ENCODE measurements at regions of chr12 and their contacts with region 1.

Region 1: DNA sequence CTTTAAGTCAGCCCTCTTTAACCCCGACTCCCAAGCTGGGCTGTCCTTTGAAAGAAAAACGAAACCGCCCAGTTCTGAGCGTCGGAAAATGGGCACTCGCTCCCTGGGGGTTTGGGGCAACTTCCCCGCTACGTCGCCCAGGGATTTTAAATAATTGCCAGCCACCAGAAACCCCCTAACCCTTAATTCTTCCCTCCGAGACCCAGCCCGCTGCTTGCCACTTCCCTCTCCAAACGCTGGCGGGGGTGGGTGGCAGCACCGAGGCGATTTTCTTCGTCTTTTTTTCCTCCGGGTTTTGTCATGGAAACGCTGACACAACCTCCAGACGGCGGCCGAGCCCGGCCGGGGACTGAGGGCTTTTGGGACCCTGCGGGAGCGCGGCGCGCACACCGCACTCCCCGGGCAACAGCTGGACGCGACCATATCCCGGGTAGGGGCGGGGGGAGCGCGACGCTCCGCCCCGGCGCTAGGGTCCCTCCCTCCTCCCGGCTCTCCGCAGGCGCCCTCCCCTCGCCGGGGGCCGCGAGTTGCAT is at the start of gene CHST11:
- DNase-seq: peak; percentile 71
- ATAC-seq: peak; percentile 70
- H3K4me3 Mint-ChIP-seq: peak within 1 kb of the TSS; percentile 99
- H3K27ac Mint-ChIP-seq: peak within 1 kb of the TSS; percentile 93
- H3K4me1 Mint-ChIP-seq: peaks cover 49% of the 10 kb centered on the region
- H3K27me3 Mint-ChIP-seq: no peaks in the 10 kb centered on the region
- CTCF ChIP-seq: no peak
- total RNA-seq, gene CHST11: 40.1 and 40.6 TPM in 2 replicates

Region 2: GRCh38 chr12:104108755-104109445 is 347.6 kb before region 1 on chr12:
- CTCF ChIA-PET with region 1: no interaction called
- POLR2A ChIA-PET with region 1: no interaction called
- intact Hi-C with region 1: no loop called
- DNase-seq: peak; percentile 58
- ATAC-seq: peak; percentile 94
- H3K4me3 Mint-ChIP-seq: peak overlapping the region; percentile 11
- H3K27ac Mint-ChIP-seq: no peak overlapping the region
- H3K4me1 Mint-ChIP-seq: peaks cover 9% of the 10 kb centered on the region
- H3K27me3 Mint-ChIP-seq: no peaks in the 10 kb centered on the region
- CTCF ChIP-seq: peak; percentile 92

Region 3: GRCh38 chr12:104478396-104479122 is 22.1 kb after region 1 on chr12:
- CTCF ChIA-PET with region 1: interaction called, 8 read pairs
- POLR2A ChIA-PET with region 1: interaction called, 64 read pairs
- intact Hi-C with region 1: loop called (anchors 2 kb)
- DNase-seq: no peak
- ATAC-seq: peak; percentile 84
- H3K4me3 Mint-ChIP-seq: peak overlapping the region; percentile 87
- H3K27ac Mint-ChIP-seq: peak overlapping the region; percentile 90
- H3K4me1 Mint-ChIP-seq: peaks cover 92% of the 10 kb centered on the region
- H3K27me3 Mint-ChIP-seq: no peaks in the 10 kb centered on the region
- CTCF ChIP-seq: no peak

Region 4: GRCh38 chr12:104520242-104520900 is 63.9 kb after region 1 on chr12:
- CTCF ChIA-PET with region 1: interaction called, 3 read pairs
- POLR2A ChIA-PET with region 1: interaction called, 9 read pairs
- intact Hi-C with region 1: loop called (anchors 2 kb)
- DNase-seq: peak; percentile 53
- ATAC-seq: peak; percentile 83
- H3K4me3 Mint-ChIP-seq: peak overlapping the region; percentile 75
- H3K27ac Mint-ChIP-seq: peak overlapping the region; percentile 79
- H3K4me1 Mint-ChIP-seq: peaks cover 97% of the 10 kb centered on the region
- H3K27me3 Mint-ChIP-seq: no peaks in the 10 kb centered on the region
- CTCF ChIP-seq: no peak

Region 5: DNA sequence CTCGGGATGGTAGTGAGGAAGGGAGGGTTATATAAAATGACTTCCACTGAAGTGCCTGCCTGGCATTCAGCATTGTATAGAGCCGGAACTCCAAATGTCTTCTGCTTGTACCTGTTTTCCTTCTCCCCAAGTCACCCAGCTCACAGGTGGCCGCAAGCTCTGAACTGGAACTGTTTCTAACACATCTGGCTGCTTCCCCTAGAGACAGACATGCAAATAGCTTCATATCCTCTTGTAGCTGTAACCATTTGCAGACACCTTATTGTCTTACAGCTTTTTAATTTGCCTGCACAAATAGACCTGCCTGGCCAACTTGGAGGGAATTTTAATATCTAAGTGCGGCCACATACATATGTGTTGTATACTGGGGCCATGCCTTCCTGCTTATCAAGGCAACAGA is 126.3 kb after region 1 on chr12:
- CTCF ChIA-PET with region 1: interaction called, 6 read pairs
- POLR2A ChIA-PET with region 1: interaction called, 26 read pairs
- intact Hi-C with region 1: loop called (anchors 1 kb)
- DNase-seq: peak; percentile 26
- ATAC-seq: peak; percentile 86
- H3K4me3 Mint-ChIP-seq: peak overlapping the region; percentile 56
- H3K27ac Mint-ChIP-seq: peak overlapping the region; percentile 70
- H3K4me1 Mint-ChIP-seq: peaks cover 89% of the 10 kb centered on the region
- H3K27me3 Mint-ChIP-seq: no peaks in the 10 kb centered on the region
- CTCF ChIP-seq: no peak

Region 6: GRCh38 chr12:104750061-104750460 is 293.6 kb after region 1 on chr12:
- CTCF ChIA-PET with region 1: no interaction called
- POLR2A ChIA-PET with region 1: no interaction called
- intact Hi-C with region 1: loop called (anchors 5 kb)
- DNase-seq: no peak
- ATAC-seq: peak; percentile 51
- H3K4me3 Mint-ChIP-seq: no peak overlapping the region
- H3K27ac Mint-ChIP-seq: peak overlapping the region; percentile 50
- H3K4me1 Mint-ChIP-seq: peaks cover 66% of the 10 kb centered on the region
- H3K27me3 Mint-ChIP-seq: no peaks in the 10 kb centered on the region
- CTCF ChIP-seq: no peak

Region 7: GRCh38 chr12:105053116-105053572 is 596.7 kb after region 1 on chr12:
- CTCF ChIA-PET with region 1: no interaction called
- POLR2A ChIA-PET with region 1: no interaction called
- intact Hi-C with region 1: loop called (anchors 1 kb)
- DNase-seq: peak; percentile 36
- ATAC-seq: peak; percentile 91
- H3K4me3 Mint-ChIP-seq: no peak overlapping the region
- H3K27ac Mint-ChIP-seq: no peak overlapping the region
- H3K4me1 Mint-ChIP-seq: peaks cover 17% of the 10 kb centered on the region
- H3K27me3 Mint-ChIP-seq: no peaks in the 10 kb centered on the region
- CTCF ChIP-seq: peak; percentile 96

Measured in activated B cell treated with CpG ODN at 0.5 μM for 24 hours (primary cell).